ENCODE measurements at regions of chr5 and their contacts with region 1.

Region 1: GRCh38 chr5:155136216-155136850 is 122.8 kb downstream of the KIF4B start:
- DNase-seq: no peak
- ATAC-seq: peak; percentile 74

Region 2: DNA sequence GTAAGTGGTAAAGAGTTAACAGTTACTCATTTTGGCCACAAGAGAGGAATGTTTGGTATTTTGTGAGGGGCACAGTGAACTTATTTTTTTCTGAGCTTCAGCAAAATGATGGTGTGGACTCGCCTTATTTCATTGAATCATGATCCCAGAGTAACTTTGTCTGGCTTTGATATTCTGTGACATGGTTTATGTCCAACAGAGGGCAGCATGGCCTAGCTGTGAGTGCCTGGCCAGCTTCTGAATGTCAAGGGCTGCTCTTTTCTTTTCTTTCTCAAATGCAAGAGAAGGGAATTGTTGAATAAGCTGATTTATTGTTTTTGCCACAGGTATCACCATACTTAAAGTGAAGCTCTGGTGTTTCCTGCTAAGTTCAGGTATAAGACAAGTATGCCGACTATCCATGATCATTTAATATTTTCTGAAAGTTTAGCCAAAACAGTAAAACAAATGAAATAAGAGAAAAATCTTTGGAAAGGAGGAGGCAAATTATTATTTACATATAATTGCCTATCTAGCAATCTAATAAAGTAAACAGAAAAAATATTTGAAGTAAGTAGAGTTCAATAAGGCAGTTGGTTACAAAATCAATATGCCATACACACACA is 163.8 kb before region 1 on chr5:
- intact Hi-C with region 1: loop called (anchors 10 kb)
- DNase-seq: no peak
- ATAC-seq: peak; percentile 85

Region 3: DNA sequence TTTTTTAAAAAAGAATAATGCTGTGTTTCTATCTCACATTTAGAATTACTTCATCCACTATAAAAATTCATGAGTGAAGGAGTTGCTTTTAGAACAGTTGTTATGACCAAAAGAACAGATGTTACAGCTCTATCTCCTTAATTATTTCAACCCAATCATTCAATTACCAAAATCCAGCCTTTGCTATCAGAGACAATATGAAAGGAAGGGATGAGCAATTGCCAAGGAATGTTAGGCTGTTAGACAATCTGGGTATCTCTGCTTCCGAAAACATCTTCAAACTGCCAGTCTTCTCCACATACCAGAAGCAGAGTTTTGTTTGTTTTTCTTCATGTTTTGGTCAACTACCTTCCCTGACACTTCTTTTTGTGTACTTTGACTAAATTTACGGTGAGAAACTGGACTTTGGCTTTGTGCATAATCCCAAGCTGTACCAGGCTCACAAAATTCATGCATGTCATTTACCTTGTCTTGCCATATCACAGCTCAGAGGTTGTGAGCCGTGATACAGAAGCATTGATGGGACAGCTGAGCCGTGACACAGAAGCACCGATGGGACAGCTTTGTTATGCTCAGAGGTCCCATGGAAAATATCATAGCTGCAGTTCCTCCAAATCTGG is 282.7 kb after region 1 on chr5:
- intact Hi-C with region 1: no loop called
- DNase-seq: no peak
- ATAC-seq: no peak

Region 4: DNA sequence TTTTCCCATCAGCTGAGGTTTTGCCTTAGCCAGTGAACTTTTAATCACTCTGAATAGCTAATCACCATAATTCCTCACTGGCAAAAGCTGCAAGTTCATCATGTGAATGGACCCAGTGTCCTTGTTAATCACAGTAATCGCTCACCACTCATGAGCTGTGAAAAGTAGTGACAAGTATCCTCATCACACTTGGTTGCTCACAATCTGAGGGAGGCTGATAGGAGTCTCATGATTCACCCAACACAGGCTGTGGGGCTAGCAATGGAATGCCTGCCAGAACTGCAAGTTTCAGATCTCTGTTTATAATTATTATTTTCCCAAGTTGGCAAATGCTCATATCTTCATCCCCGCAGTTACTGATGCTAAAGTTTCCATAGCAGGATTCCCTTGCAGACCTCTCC is 344.4 kb after region 1 on chr5:
- intact Hi-C with region 1: loop called (anchors 5 kb)
- DNase-seq: no peak
- ATAC-seq: peak; percentile 96

Measured in Right ventricle myocardium superior (tissue), 1 donor.